Ovary (tissue), 10 donors: ENCODE measurements at regions of chr1 and their contacts with region 1.

Region 1: DNA sequence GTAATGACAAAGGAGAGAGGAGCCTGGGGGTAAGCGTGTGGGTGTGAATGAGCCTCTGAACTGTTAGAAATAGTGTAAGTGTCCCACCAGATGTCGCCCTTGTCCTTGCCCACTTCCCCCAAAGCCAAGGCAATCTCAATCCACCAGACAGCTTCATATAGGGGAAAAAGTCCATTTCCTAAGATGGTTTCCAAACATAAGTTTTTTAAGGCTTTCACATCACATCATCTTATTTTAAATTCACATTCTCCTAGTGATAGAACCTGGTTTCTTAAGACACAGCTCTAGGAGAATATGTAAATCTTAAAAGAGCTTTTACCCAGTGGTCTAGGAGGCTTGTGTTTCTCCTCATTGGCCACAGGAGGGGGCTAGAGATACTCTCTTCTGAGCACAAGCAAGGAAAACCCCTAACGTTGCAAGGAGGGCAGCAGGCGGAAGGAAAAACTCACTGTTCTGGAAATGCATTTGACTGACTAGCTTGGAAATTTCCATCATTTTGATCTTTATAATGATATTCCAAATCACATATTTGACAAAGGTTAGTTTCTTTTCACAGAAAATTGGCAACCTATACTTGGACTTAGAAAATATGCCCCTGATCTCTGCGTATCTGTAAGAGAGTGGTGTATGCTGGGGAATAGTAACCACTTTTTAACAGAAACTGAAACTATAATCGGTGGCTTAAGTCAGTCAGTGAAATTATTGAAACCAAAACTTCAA is 51.9 kb upstream of the LPAR3 start:
- DNase-seq: peak; percentile 40 to 56 (median 46)
- H3K4me3 ChIP-seq: peak overlapping the region; percentile 32
- H3K27ac ChIP-seq: peak overlapping the region in 1 of 2 donors; percentile 41
- H3K4me1 ChIP-seq: peaks cover 2% of the 10 kb centered on the region
- H3K27me3 ChIP-seq: no peaks in the 10 kb centered on the region
- CTCF ChIP-seq: peak; percentile 74 to 97 (median 86)
- EP300 ChIP-seq: no peak
- POLR2A ChIP-seq: no peak

Region 2: DNA sequence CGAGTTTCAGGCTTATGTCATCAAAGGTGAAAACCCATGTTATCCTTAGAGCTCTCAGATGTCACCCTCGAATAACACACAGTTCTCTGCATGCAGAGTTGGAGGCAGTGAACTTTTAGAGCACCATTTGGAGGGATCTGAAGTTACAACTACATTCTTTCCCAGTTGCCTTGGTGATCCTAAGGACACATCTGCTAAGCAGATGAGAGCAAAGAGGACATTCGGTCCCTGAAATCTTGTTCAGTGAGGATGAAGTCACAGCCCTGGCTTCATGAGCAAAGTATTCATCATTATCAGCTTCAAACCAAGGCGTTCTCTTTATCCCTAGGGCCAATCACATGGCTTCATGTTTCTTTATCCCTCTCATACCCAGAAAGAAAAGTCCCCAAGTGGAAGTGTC is 75.1 kb after region 1 on chr1:
- intact Hi-C with region 1: loop called in 1 of 4 experiments (anchors 5 kb)
- DNase-seq: no peak
- H3K4me3 ChIP-seq: no peak overlapping the region
- H3K27ac ChIP-seq: no peak overlapping the region
- H3K4me1 ChIP-seq: no peaks in the 10 kb centered on the region
- H3K27me3 ChIP-seq: no peaks in the 10 kb centered on the region
- CTCF ChIP-seq: no peak
- EP300 ChIP-seq: no peak
- POLR2A ChIP-seq: no peak

Region 3: GRCh38 chr1:85259118-85259911 is 314.4 kb after region 1 on chr1 and contains the start of gene C1orf52:
- intact Hi-C with region 1: loop called (anchors 5 to 10 kb)
- DNase-seq: peak; percentile 94 to 99 (median 97)
- H3K4me3 ChIP-seq: peak within 1 kb of the TSS; percentile 94
- H3K27ac ChIP-seq: peak within 1 kb of the TSS in 1 of 2 donors; percentile 1
- H3K4me1 ChIP-seq: peaks cover 6% of the 10 kb centered on the region
- H3K27me3 ChIP-seq: no peaks in the 10 kb centered on the region
- CTCF ChIP-seq: peak; percentile 94 to 100 (median 96)
- EP300 ChIP-seq: no peak
- POLR2A ChIP-seq: peak; percentile 54
- total RNA-seq, gene C1orf52: 10.7 to 24.6 (median 18.8) TPM